Right ventricle myocardium superior (tissue), 1 donor: ENCODE measurements at regions of chr12 and their contacts with region 1.

Region 1: DNA sequence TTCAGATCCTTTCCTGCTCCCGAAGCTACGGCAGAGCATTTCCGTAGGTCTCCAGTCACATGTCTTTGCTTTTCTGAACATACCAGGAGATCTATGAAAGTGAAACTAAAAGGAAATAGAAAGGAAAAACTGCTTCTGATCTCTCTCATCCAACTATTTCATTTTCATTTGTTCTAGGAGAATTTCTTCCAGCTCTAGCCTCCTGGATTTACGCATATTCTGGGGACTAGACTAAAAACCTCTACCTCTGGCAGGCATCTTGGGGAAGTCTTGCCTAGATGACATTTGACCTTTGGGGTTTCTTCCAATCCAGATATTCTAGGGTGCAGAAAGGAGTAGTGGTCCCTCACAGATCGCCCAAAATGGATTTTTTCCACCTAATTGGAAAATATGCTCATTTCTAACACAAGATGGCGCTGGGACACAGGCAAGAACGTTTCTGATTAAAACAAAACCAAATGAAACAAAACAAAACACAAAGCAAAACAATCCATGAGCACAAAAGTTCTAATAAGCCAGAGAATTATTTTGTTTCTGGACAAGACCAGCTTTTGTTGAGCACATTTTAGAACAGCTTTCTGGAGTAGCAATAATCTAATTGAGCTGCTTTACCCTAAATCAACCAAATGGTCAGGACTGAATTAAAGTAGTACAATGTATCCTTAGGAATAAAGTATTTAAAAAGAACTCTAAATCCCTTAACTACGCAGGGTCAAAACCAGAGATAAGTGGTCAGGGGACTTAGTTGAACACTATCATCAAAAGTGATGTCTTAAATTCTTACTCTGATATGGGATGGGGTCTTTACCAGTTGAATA is 12.3 kb upstream of the PARP11 start:
- DNase-seq: no peak
- ATAC-seq: peak; percentile 70

Region 2: GRCh38 chr12:3350422-3350821 is 535.1 kb before region 1 on chr12:
- intact Hi-C with region 1: no loop called
- DNase-seq: no peak
- ATAC-seq: no peak

Region 3: DNA sequence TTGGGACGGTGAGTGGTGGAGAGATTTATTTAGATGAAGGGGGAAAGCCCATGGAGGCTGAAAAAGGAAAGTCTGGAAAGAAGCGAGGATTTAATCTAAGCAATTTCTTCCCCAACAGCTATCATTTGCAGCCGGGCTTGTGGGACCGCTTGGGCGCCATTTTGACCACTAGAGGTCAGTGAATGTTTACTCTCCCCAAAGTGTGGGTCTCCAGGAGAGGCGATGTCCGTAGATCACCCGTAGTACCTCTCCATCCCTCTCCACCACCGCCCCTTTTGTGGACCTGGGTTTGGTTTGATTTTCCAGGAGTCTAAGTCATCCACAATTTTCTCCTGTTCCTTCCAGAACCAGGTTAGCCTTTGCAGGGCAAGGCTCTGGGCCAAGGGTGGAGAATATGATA is 79.0 kb after region 1 on chr12:
- intact Hi-C with region 1: no loop called
- DNase-seq: no peak
- ATAC-seq: peak; percentile 57

Region 4: GRCh38 chr12:4027412-4027811 is 141.9 kb after region 1 on chr12:
- intact Hi-C with region 1: no loop called
- DNase-seq: no peak
- ATAC-seq: no peak

Region 5: DNA sequence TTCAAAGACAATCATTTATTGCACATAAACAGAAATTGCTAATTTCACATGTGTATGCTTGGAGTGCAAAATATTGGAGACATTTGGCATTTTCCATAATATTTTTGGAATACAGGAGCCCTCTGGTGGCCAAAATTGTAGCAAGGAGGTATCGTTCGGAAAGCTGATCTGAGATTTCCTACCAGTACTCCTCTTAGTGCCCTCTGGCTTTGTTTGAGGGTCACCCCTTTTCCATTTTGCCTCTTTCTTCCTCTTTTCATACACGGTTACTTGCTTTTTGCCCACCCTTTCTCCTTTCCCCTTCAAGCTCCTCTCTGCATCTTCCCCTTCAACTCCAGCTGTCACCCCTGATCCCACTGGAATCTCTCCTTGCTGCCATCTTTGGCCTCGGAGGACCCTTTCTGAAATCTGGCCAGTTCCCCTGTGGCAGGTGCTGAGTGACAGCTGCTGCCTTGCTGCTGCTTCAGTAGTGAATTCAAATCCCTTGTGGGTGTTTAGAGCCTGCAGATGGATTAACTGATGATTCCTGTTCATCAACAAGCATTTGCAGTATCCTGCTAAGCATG is 152.3 kb after region 1 on chr12:
- intact Hi-C with region 1: loop called (anchors 2 kb)
- DNase-seq: no peak
- ATAC-seq: peak; percentile 36